CD8-positive, alpha-beta T cell (primary cell): ENCODE measurements at regions of chr7 and their contacts with region 1.

Region 1: GRCh38 chr7:39948956-39949928 is 814 bp upstream of the CDK13 start:
- DNase-seq: peak; percentile 95 to 100 (median 99)
- ATAC-seq: peak; percentile 74
- H3K4me3 ChIP-seq: peak overlapping the region; percentile 83 to 93
- H3K4me3 Mint-ChIP-seq: peak overlapping the region; percentile 97
- H3K27ac ChIP-seq: peak overlapping the region; percentile 88 to 95
- H3K27ac Mint-ChIP-seq: peak overlapping the region; percentile 99
- H3K4me1 ChIP-seq: peaks cover 27% of the 10 kb centered on the region
- H3K4me1 Mint-ChIP-seq: peaks cover 42% of the 10 kb centered on the region
- H3K27me3 ChIP-seq: no peaks in the 10 kb centered on the region
- H3K27me3 Mint-ChIP-seq: no peaks in the 10 kb centered on the region
- CTCF ChIP-seq: no peak

Region 2: DNA sequence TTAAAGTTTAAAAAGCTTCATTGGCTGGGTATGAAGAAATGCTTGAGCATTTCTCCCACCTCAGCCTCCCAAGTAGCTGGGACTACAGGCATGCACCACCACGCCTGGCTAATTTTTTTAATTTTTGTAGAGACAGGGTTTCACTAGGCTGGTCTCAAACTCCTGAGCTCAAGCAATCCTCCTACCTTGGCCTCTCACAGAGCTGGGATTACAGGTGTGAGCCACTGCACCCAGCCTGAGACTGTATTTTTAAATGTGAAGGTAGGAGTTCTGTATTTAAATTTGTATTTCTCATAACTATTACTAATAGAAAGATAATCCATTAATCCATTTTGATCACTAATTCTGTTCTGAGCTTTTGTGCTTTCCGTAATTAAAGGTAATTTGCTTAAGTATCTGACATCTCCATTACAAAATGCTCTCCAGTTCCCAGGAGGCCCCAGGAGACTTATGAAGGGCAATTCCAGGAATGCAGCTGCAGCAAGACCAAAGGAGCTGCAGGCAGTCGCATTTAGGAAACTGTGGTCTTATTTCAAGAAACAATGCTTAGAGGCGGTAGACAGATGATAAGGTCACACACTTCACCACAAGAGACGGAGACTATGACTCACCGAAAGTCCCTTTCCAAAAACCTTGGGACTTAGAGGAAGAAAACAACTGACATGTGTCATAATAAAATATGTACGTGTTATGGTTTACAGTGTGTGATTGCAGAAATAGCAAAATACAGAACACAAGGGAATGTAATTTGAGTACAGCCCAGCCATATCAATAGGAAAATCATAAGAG is 359.7 kb before region 1 on chr7:
- CTCF ChIA-PET with region 1: no interaction called
- POLR2A ChIA-PET with region 1: interaction called, 3 read pairs
- intact Hi-C with region 1: loop called (anchors 5 kb)
- DNase-seq: peak in 8 of 9 experiments; percentile 34 to 85 (median 58)
- ATAC-seq: peak; percentile 77
- H3K4me3 ChIP-seq: no peak overlapping the region
- H3K4me3 Mint-ChIP-seq: no peak overlapping the region
- H3K27ac ChIP-seq: no peak overlapping the region
- H3K27ac Mint-ChIP-seq: peak overlapping the region; percentile 49
- H3K4me1 ChIP-seq: peaks cover 10% of the 10 kb centered on the region
- H3K4me1 Mint-ChIP-seq: peaks cover 22% of the 10 kb centered on the region
- H3K27me3 ChIP-seq: no peaks in the 10 kb centered on the region
- H3K27me3 Mint-ChIP-seq: no peaks in the 10 kb centered on the region
- CTCF ChIP-seq: no peak

Region 3: GRCh38 chr7:39971924-39972323 is 22.7 kb after region 1 on chr7:
- CTCF ChIA-PET with region 1: no interaction called
- POLR2A ChIA-PET with region 1: interaction called, 12 read pairs
- intact Hi-C with region 1: no loop called
- DNase-seq: no peak
- ATAC-seq: no peak
- H3K4me3 ChIP-seq: no peak overlapping the region
- H3K4me3 Mint-ChIP-seq: peak overlapping the region; percentile 18
- H3K27ac ChIP-seq: no peak overlapping the region
- H3K27ac Mint-ChIP-seq: no peak overlapping the region
- H3K4me1 ChIP-seq: peaks cover 64% of the 10 kb centered on the region
- H3K4me1 Mint-ChIP-seq: peaks cover 73% of the 10 kb centered on the region
- H3K27me3 ChIP-seq: no peaks in the 10 kb centered on the region
- H3K27me3 Mint-ChIP-seq: no peaks in the 10 kb centered on the region
- CTCF ChIP-seq: no peak

Region 4: DNA sequence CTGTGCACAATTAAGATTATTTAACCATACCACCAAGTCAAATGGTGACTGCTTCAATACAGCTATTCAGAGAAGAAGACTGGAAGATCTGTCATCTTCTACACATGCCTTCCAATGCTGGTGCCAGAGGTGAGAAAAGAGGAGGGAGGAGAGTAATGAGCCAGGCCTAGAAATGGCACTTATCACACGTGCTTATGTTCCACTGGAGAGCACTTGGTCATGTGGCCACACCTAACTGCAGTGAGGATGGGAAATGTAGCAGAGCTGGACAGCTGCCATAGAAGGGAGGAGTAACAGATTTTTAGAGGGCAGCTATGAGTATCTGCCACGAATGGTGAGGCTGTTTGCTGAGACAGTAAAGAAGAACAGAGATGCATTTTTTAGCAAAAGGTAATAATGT is 108.0 kb after region 1 on chr7:
- CTCF ChIA-PET with region 1: interaction called, 27 read pairs
- POLR2A ChIA-PET with region 1: interaction called, 8 read pairs
- intact Hi-C with region 1: loop called (anchors 1 kb)
- DNase-seq: no peak
- ATAC-seq: no peak
- H3K4me3 ChIP-seq: no peak overlapping the region
- H3K4me3 Mint-ChIP-seq: no peak overlapping the region
- H3K27ac ChIP-seq: no peak overlapping the region
- H3K27ac Mint-ChIP-seq: no peak overlapping the region
- H3K4me1 ChIP-seq: no peaks in the 10 kb centered on the region
- H3K4me1 Mint-ChIP-seq: peaks cover 8% of the 10 kb centered on the region
- H3K27me3 ChIP-seq: no peaks in the 10 kb centered on the region
- H3K27me3 Mint-ChIP-seq: no peaks in the 10 kb centered on the region
- CTCF ChIP-seq: no peak

Region 5: DNA sequence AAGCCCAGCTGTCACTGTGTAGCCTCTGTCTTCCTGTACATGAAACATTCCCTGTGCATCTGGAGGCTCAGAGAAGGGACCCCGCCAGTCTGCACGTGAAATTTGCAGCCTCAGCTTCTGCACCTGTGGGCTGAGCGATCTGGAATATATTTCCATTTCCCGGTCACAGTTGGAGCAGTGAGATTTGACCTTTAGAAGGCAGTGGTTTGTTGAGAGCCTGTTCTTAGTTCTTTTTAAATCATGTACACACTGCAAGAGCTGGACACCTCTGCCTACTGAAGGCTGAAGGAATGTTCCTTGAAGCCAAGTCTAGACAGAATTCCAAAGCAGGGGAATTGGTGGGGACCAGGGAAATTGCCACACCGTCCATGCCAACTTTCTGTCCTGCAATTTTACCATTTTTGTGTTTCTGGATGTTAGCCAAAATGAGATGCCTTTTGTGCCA is 1047.0 kb after region 1 on chr7:
- CTCF ChIA-PET with region 1: no interaction called
- POLR2A ChIA-PET with region 1: no interaction called
- intact Hi-C with region 1: no loop called
- DNase-seq: no peak
- ATAC-seq: no peak
- H3K4me3 ChIP-seq: no peak overlapping the region
- H3K4me3 Mint-ChIP-seq: no peak overlapping the region
- H3K27ac ChIP-seq: no peak overlapping the region
- H3K27ac Mint-ChIP-seq: no peak overlapping the region
- H3K4me1 ChIP-seq: no peaks in the 10 kb centered on the region
- H3K4me1 Mint-ChIP-seq: no peaks in the 10 kb centered on the region
- H3K27me3 ChIP-seq: no peaks in the 10 kb centered on the region
- H3K27me3 Mint-ChIP-seq: no peaks in the 10 kb centered on the region
- CTCF ChIP-seq: no peak